ENCODE measurements at regions of chr17 and their contacts with region 1.

Region 1: GRCh38 chr17:36601303-36602029 is at the start of gene MRM1:
- DNase-seq: peak; percentile 96
- H3K4me3 Mint-ChIP-seq: peak within 1 kb of the TSS; percentile 94
- H3K27ac Mint-ChIP-seq: peak within 1 kb of the TSS; percentile 90
- H3K4me1 Mint-ChIP-seq: peaks cover 33% of the 10 kb centered on the region
- H3K27me3 Mint-ChIP-seq: no peaks in the 10 kb centered on the region
- total RNA-seq, gene MRM1: 25.1 and 26.8 TPM in 2 replicates

Region 2: GRCh38 chr17:36524428-36524876 is 77.0 kb before region 1 on chr17:
- intact Hi-C with region 1: no loop called
- DNase-seq: no peak
- H3K4me3 Mint-ChIP-seq: no peak overlapping the region
- H3K27ac Mint-ChIP-seq: peak overlapping the region; percentile 86
- H3K4me1 Mint-ChIP-seq: peaks cover 14% of the 10 kb centered on the region
- H3K27me3 Mint-ChIP-seq: no peaks in the 10 kb centered on the region

Region 3: DNA sequence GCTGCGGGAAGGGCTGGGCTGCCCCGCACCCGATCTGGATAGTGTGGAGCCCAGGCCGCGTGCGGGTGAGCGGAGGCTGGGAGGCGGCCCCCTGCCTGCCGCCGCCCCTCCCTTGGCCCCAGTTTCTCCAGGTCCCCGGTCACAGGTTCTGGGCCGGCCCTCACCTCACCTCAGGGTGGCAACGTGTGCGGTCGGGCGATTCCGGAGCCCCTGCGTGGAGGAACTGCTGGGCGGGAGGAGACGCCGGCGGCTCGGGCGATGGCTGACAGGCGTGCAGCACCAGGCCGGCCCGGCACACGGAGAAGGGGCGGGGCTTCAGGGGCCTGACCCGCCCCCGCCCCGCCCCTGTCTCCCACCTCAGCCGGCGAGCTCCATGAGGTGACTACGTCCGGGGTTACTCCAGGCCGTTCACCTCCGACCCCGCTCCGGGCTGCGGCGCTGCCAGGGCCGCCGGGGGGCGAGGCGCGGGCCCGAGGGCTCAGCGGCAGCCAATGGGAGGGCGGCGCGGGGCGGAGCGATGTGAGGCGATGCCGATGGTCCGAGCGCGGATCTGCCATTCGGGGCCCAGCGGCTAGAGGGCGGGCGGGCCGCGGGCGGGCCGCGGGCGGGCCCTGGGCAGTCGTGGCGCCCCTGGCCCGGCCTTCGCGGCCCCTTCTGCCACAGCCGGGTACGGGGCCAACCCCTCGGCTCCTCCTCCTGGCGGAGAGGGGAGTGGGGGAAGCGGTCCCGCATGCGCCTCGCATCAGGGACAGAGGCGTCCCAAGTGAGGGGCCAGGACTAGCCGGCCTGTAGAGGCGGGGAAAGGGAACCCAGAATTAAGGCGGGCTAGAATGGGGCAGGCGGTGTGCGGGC is 757.6 kb after region 1 on chr17:
- intact Hi-C with region 1: loop called (anchors 10 kb)
- DNase-seq: peak; percentile 97
- H3K4me3 Mint-ChIP-seq: peak overlapping the region; percentile 97
- H3K27ac Mint-ChIP-seq: peak overlapping the region; percentile 93
- H3K4me1 Mint-ChIP-seq: peaks cover 25% of the 10 kb centered on the region
- H3K27me3 Mint-ChIP-seq: no peaks in the 10 kb centered on the region